ENCODE measurements at regions of chr19 and their contacts with region 1.

Region 1: DNA sequence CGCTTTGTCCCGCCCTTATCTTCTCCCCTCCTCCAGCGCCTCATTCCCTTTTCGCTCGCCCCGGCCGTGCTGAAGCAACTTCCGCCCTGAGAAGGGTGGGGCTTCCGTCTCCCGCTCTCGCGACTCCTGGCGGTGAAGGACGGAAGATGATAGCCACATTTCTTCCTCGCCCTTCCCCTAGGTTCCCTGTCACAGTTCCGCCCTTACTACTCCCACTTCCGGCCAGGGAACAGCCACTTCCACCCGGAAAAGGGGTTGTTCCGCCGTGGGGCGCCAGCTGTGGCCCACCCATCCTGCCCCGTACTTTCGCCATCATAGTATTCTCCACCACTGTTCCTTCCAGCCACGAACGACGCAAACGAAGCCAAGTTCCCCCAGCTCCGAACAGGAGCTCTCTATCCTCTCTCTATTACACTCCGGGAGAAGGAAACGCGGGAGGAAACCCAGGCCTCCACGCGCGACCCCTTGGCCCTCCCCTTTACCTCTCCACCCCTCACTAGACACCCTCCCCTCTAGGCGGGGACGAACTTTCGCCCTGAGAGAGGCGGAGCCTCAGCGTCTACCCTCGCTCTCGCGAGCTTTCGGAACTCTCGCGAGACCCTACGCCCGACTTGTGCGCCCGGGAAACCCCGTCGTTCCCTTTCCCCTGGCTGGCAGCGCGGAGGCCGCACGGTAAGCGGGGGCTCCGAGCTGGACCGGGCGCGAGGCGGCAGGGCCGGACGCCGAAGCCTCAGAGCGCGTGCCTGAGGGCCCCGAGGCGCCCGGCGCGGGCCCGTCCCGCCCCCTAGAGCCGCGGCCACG is at the start of gene RPS19:
- DNase-seq: peak; percentile 99
- ATAC-seq: peak; percentile 84
- H3K4me3 ChIP-seq: peak within 1 kb of the TSS; percentile 75 to 96 (median 75)
- H3K4me3 Mint-ChIP-seq: peak within 1 kb of the TSS; percentile 92
- H3K27ac ChIP-seq: peak within 1 kb of the TSS; percentile 92 to 94
- H3K27ac Mint-ChIP-seq: peak within 1 kb of the TSS; percentile 97
- H3K4me1 ChIP-seq: peaks cover 40 to 48% of the 10 kb centered on the region in 2 donors
- H3K4me1 Mint-ChIP-seq: peaks cover 45% of the 10 kb centered on the region
- H3K27me3 ChIP-seq: no peaks in the 10 kb centered on the region
- H3K27me3 Mint-ChIP-seq: no peaks in the 10 kb centered on the region
- CTCF ChIP-seq: peak; percentile 86
- total RNA-seq, gene RPS19: 3,294 and 3,322 TPM in 2 replicates

Region 2: GRCh38 chr19:41872775-41873647 is 13.2 kb after region 1 on chr19:
- CTCF ChIA-PET with region 1: interaction called, 83 read pairs
- POLR2A ChIA-PET with region 1: interaction called, 44 read pairs
- intact Hi-C with region 1: loop called (anchors 1 kb)
- DNase-seq: peak; percentile 80
- ATAC-seq: no peak
- H3K4me3 ChIP-seq: no peak overlapping the region
- H3K4me3 Mint-ChIP-seq: peak overlapping the region; percentile 52
- H3K27ac ChIP-seq: peak overlapping the region; percentile 79 to 96
- H3K27ac Mint-ChIP-seq: peak overlapping the region; percentile 90
- H3K4me1 ChIP-seq: peaks cover 68 to 90% of the 10 kb centered on the region in 2 donors
- H3K4me1 Mint-ChIP-seq: peaks cover 70% of the 10 kb centered on the region
- H3K27me3 ChIP-seq: no peaks in the 10 kb centered on the region
- H3K27me3 Mint-ChIP-seq: no peaks in the 10 kb centered on the region
- CTCF ChIP-seq: peak; percentile 82

Region 3: GRCh38 chr19:41928221-41928683 is 68.4 kb after region 1 on chr19 and contains the start of gene ERFL:
- CTCF ChIA-PET with region 1: interaction called, 10 read pairs
- POLR2A ChIA-PET with region 1: no interaction called
- intact Hi-C with region 1: no loop called
- DNase-seq: peak; percentile 59
- ATAC-seq: peak; percentile 31
- H3K4me3 ChIP-seq: peak within 1 kb of the TSS; percentile 49 to 72 (median 60)
- H3K4me3 Mint-ChIP-seq: no peak within 1 kb of the TSS
- H3K27ac ChIP-seq: peak within 1 kb of the TSS; percentile 18 to 56
- H3K27ac Mint-ChIP-seq: peak within 1 kb of the TSS; percentile 87
- H3K4me1 ChIP-seq: peaks cover 52 to 60% of the 10 kb centered on the region in 2 donors
- H3K4me1 Mint-ChIP-seq: peaks cover 32% of the 10 kb centered on the region
- H3K27me3 ChIP-seq: peaks cover 0 to 36% (median 7%) of the 10 kb centered on the region in 4 experiments
- H3K27me3 Mint-ChIP-seq: peaks cover 7% of the 10 kb centered on the region
- CTCF ChIP-seq: no peak
- total RNA-seq, gene ERFL: 2.3 and 2.4 TPM in 2 replicates

Region 4: DNA sequence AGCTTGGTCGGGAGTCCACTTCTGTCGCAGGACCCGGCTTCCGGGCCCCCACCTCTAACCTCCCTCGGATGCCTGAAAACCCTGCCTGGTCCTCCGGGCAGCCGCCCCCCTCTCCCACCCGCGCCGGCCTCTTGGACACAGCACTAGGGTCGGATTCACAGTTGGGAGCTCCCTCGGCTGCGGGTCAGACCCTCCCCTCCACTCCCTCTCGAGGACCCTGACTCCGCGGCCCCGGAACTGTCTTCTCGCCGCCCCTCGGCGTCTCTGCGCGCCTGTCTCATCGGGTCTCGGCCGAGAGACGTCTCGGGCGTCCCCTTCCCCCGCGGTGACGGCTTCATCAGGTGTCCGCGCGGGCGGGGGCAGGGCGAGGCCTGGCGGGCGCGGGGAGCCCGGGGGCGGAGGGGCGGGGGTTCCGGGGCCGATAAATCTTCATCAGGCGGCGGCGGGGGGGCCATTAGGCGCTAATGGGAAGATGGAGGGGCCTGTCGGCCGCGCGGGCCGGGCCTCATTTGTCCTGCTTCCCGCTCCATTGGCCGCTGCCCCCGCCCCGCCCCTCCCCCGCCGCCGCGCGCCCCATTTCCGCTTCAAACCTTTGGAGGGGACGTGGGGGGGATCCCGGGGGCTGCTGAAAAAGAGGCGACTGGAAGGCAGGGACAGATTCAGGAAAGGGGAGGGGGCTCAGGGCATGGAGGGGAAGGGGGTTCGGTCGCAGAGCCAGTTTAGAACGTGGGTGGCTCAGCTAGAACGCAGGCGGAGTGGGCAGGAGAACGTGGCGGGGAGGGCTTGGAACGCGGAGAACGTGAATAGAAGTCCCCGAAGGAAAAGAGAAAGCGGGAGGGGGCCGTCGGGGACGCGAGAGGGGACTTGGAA is 80.3 kb after region 1 on chr19:
- CTCF ChIA-PET with region 1: interaction called, 331 read pairs
- POLR2A ChIA-PET with region 1: interaction called, 13 read pairs
- intact Hi-C with region 1: loop called (anchors 1 kb)
- DNase-seq: peak; percentile 74
- ATAC-seq: peak; percentile 39
- H3K4me3 ChIP-seq: peak overlapping the region in 4 of 5 experiments; percentile 52 to 88 (median 70)
- H3K4me3 Mint-ChIP-seq: peak overlapping the region; percentile 92
- H3K27ac ChIP-seq: peak overlapping the region; percentile 86 to 91
- H3K27ac Mint-ChIP-seq: peak overlapping the region; percentile 95
- H3K4me1 ChIP-seq: peaks cover 47 to 73% of the 10 kb centered on the region in 2 donors
- H3K4me1 Mint-ChIP-seq: peaks cover 57% of the 10 kb centered on the region
- H3K27me3 ChIP-seq: no peaks in the 10 kb centered on the region
- H3K27me3 Mint-ChIP-seq: no peaks in the 10 kb centered on the region
- CTCF ChIP-seq: no peak

Region 5: DNA sequence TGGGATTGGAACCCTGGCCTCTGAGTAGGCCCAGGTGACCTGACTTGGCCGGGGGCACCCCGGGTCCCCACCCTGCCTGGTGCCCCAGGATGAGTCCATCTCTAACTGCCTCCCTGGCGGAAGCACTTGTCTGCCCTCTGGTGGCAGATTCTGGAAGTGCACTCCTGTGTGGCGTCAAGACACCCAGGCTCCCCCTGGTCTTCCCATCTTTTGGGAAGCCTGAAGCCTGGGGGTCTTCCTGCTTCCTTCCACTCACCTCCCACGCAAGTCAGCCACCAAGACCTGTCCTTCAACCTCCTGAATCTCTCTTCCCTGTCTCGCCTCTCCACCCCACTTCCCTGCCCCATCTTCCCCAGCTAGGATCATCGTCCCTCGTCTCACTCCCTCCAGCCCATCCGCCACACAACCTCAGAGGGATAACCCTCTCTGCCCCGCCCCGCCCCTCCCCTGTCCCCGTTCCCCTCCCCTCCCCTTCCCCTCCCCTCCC is 91.9 kb after region 1 on chr19:
- CTCF ChIA-PET with region 1: interaction called, 331 read pairs
- POLR2A ChIA-PET with region 1: interaction called, 20 read pairs
- intact Hi-C with region 1: loop called (anchors 1 kb)
- DNase-seq: peak; percentile 88
- ATAC-seq: peak; percentile 94
- H3K4me3 ChIP-seq: no peak overlapping the region
- H3K4me3 Mint-ChIP-seq: no peak overlapping the region
- H3K27ac ChIP-seq: no peak overlapping the region
- H3K27ac Mint-ChIP-seq: peak overlapping the region; percentile 74
- H3K4me1 ChIP-seq: peaks cover 14 to 23% of the 10 kb centered on the region in 2 donors
- H3K4me1 Mint-ChIP-seq: peaks cover 33% of the 10 kb centered on the region
- H3K27me3 ChIP-seq: no peaks in the 10 kb centered on the region
- H3K27me3 Mint-ChIP-seq: no peaks in the 10 kb centered on the region
- CTCF ChIP-seq: peak; percentile 99

Region 6: GRCh38 chr19:42032431-42032830 is 172.6 kb after region 1 on chr19:
- CTCF ChIA-PET with region 1: interaction called, 13 read pairs
- POLR2A ChIA-PET with region 1: no interaction called
- intact Hi-C with region 1: no loop called
- DNase-seq: no peak
- ATAC-seq: no peak
- H3K4me3 ChIP-seq: no peak overlapping the region
- H3K4me3 Mint-ChIP-seq: no peak overlapping the region
- H3K27ac ChIP-seq: no peak overlapping the region
- H3K27ac Mint-ChIP-seq: no peak overlapping the region
- H3K4me1 ChIP-seq: peaks cover 0 to 5% of the 10 kb centered on the region in 2 donors
- H3K4me1 Mint-ChIP-seq: peaks cover 6% of the 10 kb centered on the region
- H3K27me3 ChIP-seq: peaks cover 0 to 8% (median 0%) of the 10 kb centered on the region in 4 experiments
- H3K27me3 Mint-ChIP-seq: peaks cover 14% of the 10 kb centered on the region
- CTCF ChIP-seq: no peak

Region 7: DNA sequence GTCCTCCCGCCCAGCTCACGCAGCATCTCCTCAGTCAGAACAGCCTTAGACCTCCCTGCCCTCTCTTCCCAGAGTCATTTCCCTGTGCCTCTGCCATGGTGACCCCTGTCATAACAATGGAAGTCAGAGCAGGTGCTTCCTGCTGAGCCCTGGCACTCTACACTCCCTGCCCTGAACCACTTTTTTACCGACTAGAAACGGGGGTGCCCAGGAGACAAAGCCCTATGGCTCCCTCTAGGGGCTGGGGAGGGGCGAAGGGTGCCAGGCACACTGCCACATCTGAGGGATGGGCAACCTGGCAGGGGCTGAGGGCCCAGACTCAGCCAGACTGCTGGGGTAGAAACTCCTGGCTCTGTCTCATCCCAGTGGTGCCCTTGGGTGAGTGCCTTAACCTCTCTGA is 232.5 kb after region 1 on chr19:
- CTCF ChIA-PET with region 1: no interaction called
- POLR2A ChIA-PET with region 1: no interaction called
- intact Hi-C with region 1: no loop called
- DNase-seq: peak; percentile 67
- ATAC-seq: peak; percentile 64
- H3K4me3 ChIP-seq: no peak overlapping the region
- H3K4me3 Mint-ChIP-seq: no peak overlapping the region
- H3K27ac ChIP-seq: peak overlapping the region in 1 of 2 donors; percentile 78
- H3K27ac Mint-ChIP-seq: peak overlapping the region; percentile 89
- H3K4me1 ChIP-seq: peaks cover 12 to 46% of the 10 kb centered on the region in 2 donors
- H3K4me1 Mint-ChIP-seq: peaks cover 39% of the 10 kb centered on the region
- H3K27me3 ChIP-seq: no peaks in the 10 kb centered on the region
- H3K27me3 Mint-ChIP-seq: no peaks in the 10 kb centered on the region
- CTCF ChIP-seq: peak; percentile 42